ENCODE measurements at regions of chr2 and their contacts with region 1.

Region 1: DNA sequence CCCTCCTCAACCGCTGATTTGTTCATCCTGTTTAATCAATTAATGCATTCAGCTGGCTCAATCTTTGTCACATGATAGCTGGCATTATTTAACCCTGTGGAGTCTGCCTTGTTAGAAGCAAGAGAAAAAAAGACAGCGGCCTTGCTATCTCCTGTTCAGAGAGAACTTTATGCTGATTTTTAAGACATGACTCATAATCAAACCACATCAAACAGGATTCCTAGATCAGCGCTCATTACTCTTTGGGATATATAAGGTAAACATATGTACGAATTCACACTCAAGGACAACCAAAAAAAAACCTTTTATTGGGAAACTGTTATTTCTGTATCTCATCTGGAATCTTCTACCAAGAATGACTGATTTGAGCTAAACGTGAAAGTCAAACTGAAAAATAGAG is 195.1 kb downstream of the C1D start:
- DNase-seq: no peak
- H3K4me3 ChIP-seq: no peak overlapping the region
- H3K27ac ChIP-seq: no peak overlapping the region
- H3K4me1 ChIP-seq: no peaks in the 10 kb centered on the region
- H3K27me3 ChIP-seq: no peaks in the 10 kb centered on the region
- CTCF ChIP-seq: no peak
- POLR2A ChIP-seq: no peak

Region 2: GRCh38 chr2:68027959-68028358 is 160.2 kb after region 1 on chr2:
- intact Hi-C with region 1: loop called in 1 of 2 experiments (anchors 10 kb)
- DNase-seq: no peak
- H3K4me3 ChIP-seq: no peak overlapping the region
- H3K27ac ChIP-seq: no peak overlapping the region
- H3K4me1 ChIP-seq: no peaks in the 10 kb centered on the region
- H3K27me3 ChIP-seq: no peaks in the 10 kb centered on the region
- CTCF ChIP-seq: no peak
- POLR2A ChIP-seq: no peak